Activated CD4-positive, alpha-beta T cell treated with anti-CD3 and anti-CD28 coated beads for 36 hours (primary cell): ENCODE measurements at regions of chr5 and their contacts with region 1.

Region 1: DNA sequence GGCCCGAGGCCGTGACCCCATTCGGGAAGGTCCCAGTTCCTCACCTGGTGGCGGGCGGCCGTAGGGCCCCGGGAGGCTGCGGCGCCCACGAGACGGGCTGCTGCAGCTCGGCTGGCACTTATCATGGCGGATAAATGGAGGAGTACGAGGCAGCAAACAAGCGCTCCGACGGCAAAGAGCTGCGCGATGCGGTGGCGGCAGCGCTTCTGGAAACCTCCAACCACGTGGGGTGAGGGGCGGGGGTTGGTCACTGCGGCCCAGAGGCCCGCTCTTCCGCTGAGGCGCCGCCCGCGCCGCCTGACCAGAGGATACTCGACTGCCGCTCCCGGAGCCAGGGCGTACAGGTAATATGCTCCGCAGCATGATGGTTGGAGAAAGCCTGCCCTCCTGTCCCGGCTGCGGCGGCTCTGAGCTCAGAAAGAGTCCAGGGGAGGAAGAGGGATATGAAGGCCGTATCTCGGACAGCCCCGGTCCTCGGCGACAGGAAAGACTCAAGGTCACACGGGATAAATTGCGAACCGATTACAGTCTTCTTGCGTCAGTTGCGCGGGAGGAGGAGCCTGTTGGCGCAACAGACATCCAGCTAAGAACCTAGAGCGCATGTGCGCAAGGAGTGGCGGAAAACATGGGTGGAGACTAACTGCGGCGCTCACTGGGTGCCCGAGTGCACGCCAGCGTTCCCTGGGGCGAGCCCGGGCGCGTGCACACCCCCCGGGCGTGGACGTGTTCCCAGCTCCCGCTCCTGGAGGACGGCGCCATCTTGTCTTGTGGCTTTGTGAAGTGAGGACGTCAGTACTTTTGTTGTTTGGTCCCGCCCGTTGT is at the start of gene HSPA9:
- DNase-seq: peak; percentile 98
- ATAC-seq: peak; percentile 89
- H3K4me3 Mint-ChIP-seq: peak within 1 kb of the TSS; percentile 96
- H3K27ac Mint-ChIP-seq: peak within 1 kb of the TSS; percentile 99
- H3K4me1 Mint-ChIP-seq: peaks cover 43% of the 10 kb centered on the region
- H3K27me3 Mint-ChIP-seq: no peaks in the 10 kb centered on the region
- total RNA-seq, gene HSPA9: 431 to 466 TPM

Region 2: DNA sequence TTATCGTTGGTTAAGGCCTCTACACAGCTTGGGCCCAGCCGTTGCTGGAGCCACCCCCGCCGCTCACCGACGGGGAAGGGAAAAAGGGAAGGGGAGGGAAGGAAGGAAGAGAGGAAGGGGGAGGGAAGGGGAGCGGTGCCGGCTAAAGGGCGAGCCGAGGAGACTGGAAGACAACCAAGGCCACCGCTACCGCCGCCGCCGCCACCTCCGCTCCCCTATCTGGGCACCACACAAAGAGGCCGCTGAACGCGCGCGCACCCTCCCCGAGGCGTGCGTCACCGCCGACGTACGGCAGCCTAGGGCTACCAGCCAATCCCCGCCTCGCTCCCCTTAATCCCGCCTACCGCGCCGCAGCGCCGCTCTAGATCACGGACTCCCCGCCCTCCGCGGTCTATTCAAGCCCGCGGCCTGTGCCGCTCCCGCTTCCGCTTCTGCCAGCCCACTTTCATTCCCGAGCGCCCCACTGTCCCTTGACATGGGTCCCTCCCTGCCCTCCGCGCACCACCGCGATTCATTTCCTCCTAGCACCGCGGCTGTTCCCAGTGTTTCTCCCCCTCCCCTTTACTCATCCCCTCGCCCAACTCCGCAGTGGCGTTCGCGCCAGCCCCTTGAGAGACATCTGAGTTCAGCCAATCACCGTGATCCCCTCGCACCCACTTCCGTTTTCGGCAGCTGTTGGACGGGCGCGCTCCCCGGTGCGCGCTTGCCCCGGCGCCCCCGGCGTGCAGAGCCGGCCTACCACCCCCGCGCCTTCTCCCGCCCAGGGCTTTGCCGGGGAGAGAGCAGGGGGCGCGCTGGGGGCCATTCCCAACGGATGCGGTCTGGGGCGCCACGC is 821.1 kb before region 1 on chr5 and contains the start of gene HNRNPA0:
- CTCF ChIA-PET with region 1: interaction called, 3 read pairs
- POLR2A ChIA-PET with region 1: no interaction called
- intact Hi-C with region 1: loop called in 1 of 2 experiments (anchors 1 kb)
- DNase-seq: peak; percentile 98
- ATAC-seq: peak; percentile 87
- H3K4me3 Mint-ChIP-seq: peak within 1 kb of the TSS; percentile 77
- H3K27ac Mint-ChIP-seq: peak within 1 kb of the TSS; percentile 97
- H3K4me1 Mint-ChIP-seq: peaks cover 28% of the 10 kb centered on the region
- H3K27me3 Mint-ChIP-seq: no peaks in the 10 kb centered on the region
- total RNA-seq, gene HNRNPA0: 18.9 to 32.1 TPM

Region 3: GRCh38 chr5:138337685-138338410 is 237.6 kb before region 1 on chr5 and contains the start of gene FAM53C:
- CTCF ChIA-PET with region 1: no interaction called
- POLR2A ChIA-PET with region 1: no interaction called
- intact Hi-C with region 1: loop called in 1 of 2 experiments (anchors 1 kb)
- DNase-seq: peak; percentile 95
- ATAC-seq: peak; percentile 88
- H3K4me3 Mint-ChIP-seq: peak within 1 kb of the TSS; percentile 84
- H3K27ac Mint-ChIP-seq: peak within 1 kb of the TSS; percentile 97
- H3K4me1 Mint-ChIP-seq: peaks cover 38% of the 10 kb centered on the region
- H3K27me3 Mint-ChIP-seq: no peaks in the 10 kb centered on the region
- total RNA-seq, gene FAM53C: 22.8 to 25.9 TPM

Region 4: GRCh38 chr5:138491669-138492559 is 83.5 kb before region 1 on chr5:
- CTCF ChIA-PET with region 1: no interaction called
- POLR2A ChIA-PET with region 1: interaction called, 4 read pairs
- intact Hi-C with region 1: loop called in 1 of 2 experiments (anchors 1 kb)
- DNase-seq: peak; percentile 92
- ATAC-seq: peak; percentile 99
- H3K4me3 Mint-ChIP-seq: peak overlapping the region; percentile 84
- H3K27ac Mint-ChIP-seq: peak overlapping the region; percentile 79
- H3K4me1 Mint-ChIP-seq: peaks cover 15% of the 10 kb centered on the region
- H3K27me3 Mint-ChIP-seq: peaks cover 23% of the 10 kb centered on the region

Region 5: DNA sequence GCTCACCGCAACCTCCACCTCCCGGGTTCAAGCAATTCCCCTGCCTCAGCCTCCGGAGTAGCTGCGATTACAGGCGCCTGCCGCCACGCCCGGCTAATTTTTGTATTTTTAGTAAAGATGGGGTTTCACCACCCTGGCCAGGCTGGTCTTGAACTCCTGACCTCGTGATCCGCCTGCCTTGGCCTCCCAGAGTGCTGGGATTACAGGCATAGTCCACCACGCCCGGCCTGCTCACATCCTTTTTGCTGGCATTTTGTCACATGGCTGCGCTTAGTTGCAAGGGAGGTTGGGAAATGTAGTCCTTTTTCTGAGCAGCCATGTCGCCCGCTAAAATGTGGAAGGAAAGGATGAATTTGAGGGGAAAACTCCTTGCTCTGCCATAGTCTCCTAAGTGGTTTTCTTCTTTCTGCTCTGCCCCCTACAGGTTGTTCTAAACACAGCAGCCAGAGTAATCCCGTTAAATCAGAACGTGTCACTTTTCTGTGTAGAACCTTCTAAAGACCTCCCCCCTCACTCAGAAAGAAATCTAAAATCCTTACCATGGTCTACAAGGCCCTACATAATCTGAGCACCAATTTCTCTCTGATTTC is 57.6 kb after region 1 on chr5:
- CTCF ChIA-PET with region 1: interaction called, 5 read pairs
- POLR2A ChIA-PET with region 1: no interaction called
- intact Hi-C with region 1: loop called (anchors 1 to 5 kb)
- DNase-seq: peak; percentile 47
- ATAC-seq: peak; percentile 88
- H3K4me3 Mint-ChIP-seq: no peak overlapping the region
- H3K27ac Mint-ChIP-seq: no peak overlapping the region
- H3K4me1 Mint-ChIP-seq: no peaks in the 10 kb centered on the region
- H3K27me3 Mint-ChIP-seq: peaks cover 36% of the 10 kb centered on the region

Region 6: DNA sequence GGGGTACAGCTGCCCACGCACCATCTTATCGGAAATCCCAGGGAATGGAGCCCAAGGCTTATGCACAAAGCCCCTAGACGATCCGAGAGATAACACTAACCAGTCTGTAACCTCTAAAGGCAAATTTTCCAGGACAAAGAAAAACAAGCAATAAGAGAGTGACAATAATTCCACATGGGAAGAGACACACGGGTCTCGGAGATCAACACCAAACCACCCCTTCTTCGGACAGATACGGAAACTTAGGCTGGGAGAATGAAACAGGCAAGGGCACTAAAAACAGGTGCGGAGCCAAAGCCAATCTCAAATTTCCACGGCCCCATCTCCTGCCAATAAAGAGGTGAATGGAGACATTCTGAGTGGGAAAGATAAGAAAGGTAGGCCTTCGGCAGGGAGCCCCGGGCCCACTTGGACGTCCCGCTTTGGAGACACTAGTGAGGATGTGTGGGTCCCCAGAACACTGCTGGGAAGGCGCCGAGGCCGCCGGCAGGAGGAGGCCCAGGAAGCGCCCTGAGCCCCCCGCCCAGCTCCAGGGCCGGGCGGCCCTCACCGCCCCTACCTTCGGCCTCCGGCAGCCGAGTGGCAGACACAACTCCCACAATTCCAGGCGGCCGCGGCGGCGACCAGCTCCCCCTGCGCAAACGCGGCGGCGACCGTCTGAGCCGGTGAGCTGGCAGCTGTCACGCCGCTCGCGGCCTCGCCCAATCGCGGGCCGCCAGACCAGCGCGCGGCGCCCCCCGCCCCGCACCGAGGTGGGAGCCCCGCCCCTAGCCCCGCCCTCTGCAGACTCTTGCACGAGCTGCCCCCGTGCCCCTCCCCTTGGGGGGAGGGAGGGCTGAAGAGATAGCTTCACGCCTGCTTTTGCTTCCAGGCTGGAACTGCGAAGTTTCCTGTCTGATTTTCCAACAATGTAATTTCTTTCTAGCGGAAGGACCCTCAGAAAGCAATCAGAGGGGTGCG is 622.6 kb after region 1 on chr5 and contains the start of gene SIL1:
- CTCF ChIA-PET with region 1: no interaction called
- POLR2A ChIA-PET with region 1: no interaction called
- intact Hi-C with region 1: loop called (anchors 1 kb)
- DNase-seq: peak; percentile 98
- ATAC-seq: peak; percentile 100
- H3K4me3 Mint-ChIP-seq: peak within 1 kb of the TSS; percentile 90
- H3K27ac Mint-ChIP-seq: peak within 1 kb of the TSS; percentile 97
- H3K4me1 Mint-ChIP-seq: peaks cover 18% of the 10 kb centered on the region
- H3K27me3 Mint-ChIP-seq: peaks cover 2% of the 10 kb centered on the region
- total RNA-seq, gene SIL1: 11.2 to 14.4 TPM

Region 7: DNA sequence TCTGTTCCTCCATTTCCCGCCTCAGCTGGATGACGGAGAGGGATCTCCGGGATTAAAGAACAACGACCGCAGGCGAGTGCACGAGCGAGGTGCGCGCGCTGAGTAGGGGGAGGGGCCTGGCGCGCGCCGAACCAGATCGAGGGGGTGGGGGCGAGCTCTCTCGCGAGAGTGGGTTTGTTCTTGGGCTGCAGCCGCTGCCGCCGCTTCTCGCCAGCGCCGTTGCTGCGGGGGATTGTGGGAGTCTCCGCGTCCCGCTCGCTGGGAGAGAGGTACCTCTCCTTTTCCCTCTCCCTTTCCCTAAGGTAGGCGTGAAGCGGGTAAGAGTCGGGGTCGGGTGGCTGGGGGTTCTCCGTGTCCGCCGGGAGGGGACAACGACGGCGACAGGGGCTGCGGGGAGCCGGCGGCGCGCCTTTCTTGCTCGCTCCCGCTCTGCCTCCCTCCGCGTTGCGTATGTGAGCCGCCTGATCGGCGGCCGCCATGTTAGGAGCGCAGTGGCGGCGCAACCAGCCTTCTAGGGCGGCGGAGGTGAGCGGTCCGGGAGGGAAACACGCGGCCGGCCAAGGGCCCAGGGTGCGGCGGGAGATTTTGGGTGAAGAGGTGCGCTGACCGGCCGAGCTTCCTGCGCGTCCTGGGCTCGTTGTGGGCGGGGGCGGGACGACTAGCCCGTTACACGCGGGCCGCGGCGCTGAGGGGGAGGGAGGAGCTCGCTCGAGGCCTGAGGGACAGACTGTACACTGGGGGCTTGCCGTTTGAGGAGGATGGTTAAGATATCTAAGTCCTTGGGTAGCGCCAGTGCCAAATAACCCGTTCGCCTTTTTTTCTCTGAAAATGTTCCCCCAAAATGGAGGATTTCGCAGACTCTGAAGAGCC is 718.3 kb after region 1 on chr5 and contains the start of gene MATR3:
- CTCF ChIA-PET with region 1: no interaction called
- POLR2A ChIA-PET with region 1: interaction called, 6 read pairs
- intact Hi-C with region 1: loop called in 1 of 2 experiments (anchors 1 kb)
- DNase-seq: peak; percentile 98
- ATAC-seq: peak; percentile 92
- H3K4me3 Mint-ChIP-seq: peak within 1 kb of the TSS; percentile 97
- H3K27ac Mint-ChIP-seq: peak within 1 kb of the TSS; percentile 99
- H3K4me1 Mint-ChIP-seq: peaks cover 37% of the 10 kb centered on the region
- H3K27me3 Mint-ChIP-seq: no peaks in the 10 kb centered on the region
- total RNA-seq, gene MATR3: 113 to 133 TPM